Naive thymus-derived CD4-positive, alpha-beta T cell (primary cell): ENCODE measurements at regions of chr9 and their contacts with region 1.

Region 1: GRCh38 chr9:121074635-121075385 is at the start of gene CNTRL:
- DNase-seq: peak; percentile 63 to 92 (median 81)
- ATAC-seq: peak; percentile 90
- H3K4me3 ChIP-seq: peak within 1 kb of the TSS; percentile 90
- H3K4me3 Mint-ChIP-seq: peak within 1 kb of the TSS; percentile 87 to 100 (median 99)
- H3K27ac ChIP-seq: peak within 1 kb of the TSS; percentile 92
- H3K27ac Mint-ChIP-seq: peak within 1 kb of the TSS; percentile 80 to 99 (median 93)
- H3K4me1 ChIP-seq: peaks cover 22 to 24% of the 10 kb centered on the region in 2 donors
- H3K4me1 Mint-ChIP-seq: peaks cover 27 to 65% (median 50%) of the 10 kb centered on the region in 7 donors
- H3K27me3 ChIP-seq: no peaks in the 10 kb centered on the region
- H3K27me3 Mint-ChIP-seq: no peaks in the 10 kb centered on the region
- total RNA-seq, gene CNTRL: 74.5 to 131 (median 88.6) TPM

Region 2: DNA sequence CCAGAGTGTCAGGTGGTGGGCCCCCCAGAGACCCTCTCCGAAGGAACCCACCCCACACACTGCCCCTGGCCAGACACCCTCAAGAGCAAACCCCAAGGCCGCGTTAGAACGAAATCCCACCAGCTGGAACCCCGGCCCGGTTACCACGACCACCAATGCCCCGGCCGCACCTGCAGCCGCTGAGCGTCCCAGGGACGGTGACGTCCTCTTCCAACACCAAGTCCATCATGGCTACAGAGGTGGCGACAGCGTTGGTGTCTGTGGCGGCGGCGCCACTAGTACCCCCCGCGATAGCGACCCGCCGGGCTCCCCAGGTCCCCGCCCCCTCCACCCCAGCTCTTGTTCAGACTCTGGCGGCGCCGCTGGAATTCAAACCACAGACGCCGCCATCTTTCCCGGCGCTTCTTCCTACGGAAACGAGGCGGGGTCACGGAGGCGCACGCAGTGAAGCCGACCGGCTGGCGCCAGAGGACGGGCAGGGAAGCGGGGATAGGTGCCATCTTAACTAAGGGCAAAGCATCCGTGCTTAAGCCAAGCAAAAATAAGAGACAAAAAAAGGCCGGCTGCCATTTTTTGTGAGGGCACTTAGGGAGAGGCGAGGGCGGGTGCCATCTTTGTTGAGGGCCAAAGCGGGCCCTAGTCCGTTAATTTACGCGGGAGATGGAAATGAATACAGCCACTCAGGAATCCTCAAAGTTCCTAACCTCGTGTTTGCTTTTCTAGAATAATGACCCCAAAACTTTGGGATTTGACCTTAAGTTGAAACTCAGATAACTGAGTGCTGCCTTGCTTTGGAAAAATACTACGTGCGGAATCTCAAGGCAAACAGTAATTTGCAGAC is 494.8 kb before region 1 on chr9 and contains the start of gene CDK5RAP2:
- CTCF ChIA-PET with region 1: no interaction called
- POLR2A ChIA-PET with region 1: no interaction called
- intact Hi-C with region 1: loop called (anchors 1 to 5 kb)
- DNase-seq: peak; percentile 77 to 94 (median 92)
- ATAC-seq: peak; percentile 99
- H3K4me3 ChIP-seq: peak within 1 kb of the TSS; percentile 85
- H3K4me3 Mint-ChIP-seq: peak within 1 kb of the TSS; percentile 86 to 98 (median 94)
- H3K27ac ChIP-seq: peak within 1 kb of the TSS; percentile 81
- H3K27ac Mint-ChIP-seq: peak within 1 kb of the TSS; percentile 88 to 95 (median 91)
- H3K4me1 ChIP-seq: peaks cover 15 to 17% of the 10 kb centered on the region in 2 donors
- H3K4me1 Mint-ChIP-seq: peaks cover 29 to 68% (median 62%) of the 10 kb centered on the region in 7 donors
- H3K27me3 ChIP-seq: no peaks in the 10 kb centered on the region
- H3K27me3 Mint-ChIP-seq: peaks cover 0 to 3% (median 0%) of the 10 kb centered on the region in 5 donors
- total RNA-seq, gene CDK5RAP2: 62.2 to 98.1 (median 78.1) TPM

Region 3: GRCh38 chr9:120714088-120714845 is 360.5 kb before region 1 on chr9 and contains the start of gene MEGF9:
- CTCF ChIA-PET with region 1: no interaction called
- POLR2A ChIA-PET with region 1: no interaction called
- intact Hi-C with region 1: loop called (anchors 1 kb)
- DNase-seq: peak; percentile 90 to 97 (median 94)
- ATAC-seq: peak; percentile 98
- H3K4me3 ChIP-seq: peak within 1 kb of the TSS; percentile 85
- H3K4me3 Mint-ChIP-seq: peak within 1 kb of the TSS; percentile 82 to 98 (median 87)
- H3K27ac ChIP-seq: peak within 1 kb of the TSS; percentile 79
- H3K27ac Mint-ChIP-seq: peak within 1 kb of the TSS; percentile 31 to 98 (median 87)
- H3K4me1 ChIP-seq: peaks cover 22% of the 10 kb centered on the region in 2 donors
- H3K4me1 Mint-ChIP-seq: peaks cover 18 to 43% (median 36%) of the 10 kb centered on the region in 7 donors
- H3K27me3 ChIP-seq: no peaks in the 10 kb centered on the region
- H3K27me3 Mint-ChIP-seq: no peaks in the 10 kb centered on the region
- total RNA-seq, gene MEGF9: 9.5 to 35.4 (median 11.1) TPM

Region 4: DNA sequence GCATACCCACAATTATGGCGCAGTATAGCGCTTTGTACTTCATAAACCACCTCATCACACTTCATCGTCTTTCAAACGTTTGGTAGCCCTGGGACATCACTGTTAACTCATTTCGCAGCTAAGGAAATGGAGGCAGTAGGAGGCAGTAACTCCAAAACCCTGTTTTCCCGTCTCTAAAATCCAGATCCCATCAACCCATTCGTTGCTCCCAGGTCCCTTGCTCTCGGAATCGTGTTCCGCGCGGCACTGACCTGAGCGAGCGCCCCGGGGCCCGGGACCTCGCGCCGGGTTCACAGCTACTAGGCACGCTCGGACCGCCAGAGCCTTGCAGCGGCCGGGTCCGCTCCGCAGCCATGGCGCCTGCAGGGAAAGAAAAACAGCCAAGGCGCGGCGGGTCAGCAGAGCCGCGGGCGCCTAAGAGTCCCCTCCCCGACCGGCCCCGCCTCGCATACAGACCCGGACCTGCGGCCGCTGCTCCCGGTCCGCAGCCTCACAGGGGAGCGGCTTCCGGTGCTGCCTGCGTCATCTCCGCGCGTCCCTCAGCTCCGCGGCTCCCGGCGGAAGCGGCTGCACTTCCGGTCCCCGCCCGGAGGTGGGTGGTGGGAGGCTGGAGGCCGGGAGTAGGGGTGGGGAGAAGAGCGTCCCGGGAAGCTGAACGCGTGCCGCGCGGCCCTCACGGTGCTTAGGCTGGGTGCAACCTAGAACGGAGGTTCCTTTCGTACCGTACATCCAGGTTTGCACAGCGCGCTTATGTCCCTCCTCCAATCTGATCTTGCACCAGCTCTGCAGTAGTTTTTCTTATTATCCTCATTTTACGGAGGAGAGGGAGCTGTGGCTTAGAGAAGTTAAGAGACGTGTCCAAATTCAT is 281.7 kb before region 1 on chr9 and contains the start of gene FBXW2:
- CTCF ChIA-PET with region 1: interaction called, 3 read pairs
- POLR2A ChIA-PET with region 1: interaction called, 3 read pairs
- intact Hi-C with region 1: loop called (anchors 1 kb)
- DNase-seq: peak; percentile 65 to 96 (median 78)
- ATAC-seq: peak; percentile 91
- H3K4me3 ChIP-seq: peak within 1 kb of the TSS; percentile 66
- H3K4me3 Mint-ChIP-seq: peak within 1 kb of the TSS; percentile 91 to 98 (median 96)
- H3K27ac ChIP-seq: peak within 1 kb of the TSS; percentile 92
- H3K27ac Mint-ChIP-seq: peak within 1 kb of the TSS; percentile 88 to 98 (median 95)
- H3K4me1 ChIP-seq: peaks cover 28 to 34% of the 10 kb centered on the region in 2 donors
- H3K4me1 Mint-ChIP-seq: peaks cover 34 to 65% (median 58%) of the 10 kb centered on the region in 7 donors
- H3K27me3 ChIP-seq: no peaks in the 10 kb centered on the region
- H3K27me3 Mint-ChIP-seq: no peaks in the 10 kb centered on the region
- total RNA-seq, gene FBXW2: 72.5 to 90.3 (median 77.9) TPM

Region 5: GRCh38 chr9:120928483-120929228 is 146.2 kb before region 1 on chr9:
- CTCF ChIA-PET with region 1: no interaction called
- POLR2A ChIA-PET with region 1: interaction called, 3 read pairs
- intact Hi-C with region 1: loop called (anchors 2 to 5 kb)
- DNase-seq: peak; percentile 63 to 86 (median 74)
- ATAC-seq: peak; percentile 58
- H3K4me3 ChIP-seq: peak overlapping the region; percentile 79
- H3K4me3 Mint-ChIP-seq: peak overlapping the region; percentile 90 to 100 (median 96)
- H3K27ac ChIP-seq: peak overlapping the region; percentile 97
- H3K27ac Mint-ChIP-seq: peak overlapping the region; percentile 95 to 100 (median 99)
- H3K4me1 ChIP-seq: peaks cover 62 to 84% of the 10 kb centered on the region in 2 donors
- H3K4me1 Mint-ChIP-seq: peaks cover 57 to 95% (median 86%) of the 10 kb centered on the region in 7 donors
- H3K27me3 ChIP-seq: no peaks in the 10 kb centered on the region
- H3K27me3 Mint-ChIP-seq: no peaks in the 10 kb centered on the region

Region 6: DNA sequence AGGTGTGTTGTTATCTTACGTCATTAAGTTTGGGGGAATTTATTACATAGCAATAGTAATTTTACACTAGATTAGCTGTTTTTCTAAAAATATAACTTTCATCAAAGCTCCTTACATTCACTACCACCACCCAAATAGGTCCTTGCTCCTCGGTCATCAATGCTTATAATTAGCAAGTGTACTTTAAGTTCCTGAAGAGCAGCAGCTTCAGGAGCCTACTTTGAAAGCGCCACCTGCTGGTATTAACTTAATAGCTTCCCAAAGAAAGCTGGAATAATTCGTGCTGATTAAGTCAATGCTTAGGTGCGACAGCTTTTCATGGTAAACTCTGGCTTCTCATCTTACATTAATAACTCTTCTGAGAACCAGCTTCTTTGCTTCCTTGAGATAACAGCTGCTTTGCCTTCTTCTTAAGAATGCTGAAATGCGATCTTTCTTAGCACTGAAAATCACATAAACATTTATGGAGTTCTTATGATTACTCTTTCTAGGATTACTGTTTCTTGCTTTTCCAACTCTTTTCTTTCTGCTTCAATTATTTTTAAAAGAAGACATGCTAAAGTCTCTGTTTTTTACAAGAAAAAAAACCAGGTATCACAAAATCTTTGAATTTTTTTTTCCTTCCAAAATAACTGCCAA is 14.7 kb before region 1 on chr9:
- CTCF ChIA-PET with region 1: interaction called, 13 read pairs
- POLR2A ChIA-PET with region 1: interaction called, 4 read pairs
- intact Hi-C with region 1: no loop called
- DNase-seq: peak in 7 of 9 donors; percentile 16 to 59 (median 53)
- ATAC-seq: peak; percentile 67
- H3K4me3 ChIP-seq: no peak overlapping the region
- H3K4me3 Mint-ChIP-seq: no peak overlapping the region
- H3K27ac ChIP-seq: no peak overlapping the region
- H3K27ac Mint-ChIP-seq: no peak overlapping the region
- H3K4me1 ChIP-seq: peaks cover 0 to 5% of the 10 kb centered on the region in 2 donors
- H3K4me1 Mint-ChIP-seq: peaks cover 10 to 27% (median 15%) of the 10 kb centered on the region in 7 donors
- H3K27me3 ChIP-seq: no peaks in the 10 kb centered on the region
- H3K27me3 Mint-ChIP-seq: peaks cover 0 to 5% (median 0%) of the 10 kb centered on the region in 5 donors

Region 7: DNA sequence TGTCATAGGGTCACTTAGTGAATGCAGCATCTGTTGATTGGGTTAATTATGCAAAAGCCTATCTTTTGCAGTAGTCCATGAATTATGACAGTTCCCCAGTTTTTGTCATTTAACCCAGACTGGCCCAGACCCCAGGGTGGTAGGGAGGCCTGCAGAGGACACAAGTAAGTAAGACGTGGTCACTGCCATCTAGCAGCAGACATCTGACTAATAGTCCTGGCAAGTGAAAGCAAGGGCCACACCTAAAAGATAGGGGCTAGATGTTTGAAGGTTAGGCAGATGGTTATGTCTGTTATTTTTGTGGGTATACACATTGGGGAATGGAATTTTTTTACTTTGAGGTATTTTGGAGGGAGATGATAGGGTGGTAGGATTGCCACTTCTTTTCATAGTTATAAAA is 78.8 kb after region 1 on chr9:
- CTCF ChIA-PET with region 1: no interaction called
- POLR2A ChIA-PET with region 1: no interaction called
- intact Hi-C with region 1: no loop called
- DNase-seq: no peak
- ATAC-seq: no peak
- H3K4me3 ChIP-seq: no peak overlapping the region
- H3K4me3 Mint-ChIP-seq: no peak overlapping the region
- H3K27ac ChIP-seq: no peak overlapping the region
- H3K27ac Mint-ChIP-seq: peak overlapping the region in 7 of 9 donors; percentile 0 to 82 (median 51)
- H3K4me1 ChIP-seq: peaks cover 5 to 8% of the 10 kb centered on the region in 2 donors
- H3K4me1 Mint-ChIP-seq: peaks cover 14 to 51% (median 43%) of the 10 kb centered on the region in 7 donors
- H3K27me3 ChIP-seq: no peaks in the 10 kb centered on the region
- H3K27me3 Mint-ChIP-seq: no peaks in the 10 kb centered on the region